Right ventricle myocardium superior (tissue), 1 donor: ENCODE measurements at regions of chr7 and their contacts with region 1.

Region 1: GRCh38 chr7:106461993-106462859 is 177.4 kb upstream of the NAMPT start:
- DNase-seq: peak; percentile 23
- ATAC-seq: peak; percentile 63

Region 2: GRCh38 chr7:106176414-106177299 is 285.6 kb before region 1 on chr7:
- intact Hi-C with region 1: loop called (anchors 1 kb)
- DNase-seq: peak; percentile 91
- ATAC-seq: peak; percentile 90

Region 3: GRCh38 chr7:106522696-106523095 is 60.5 kb after region 1 on chr7:
- intact Hi-C with region 1: no loop called
- DNase-seq: no peak
- ATAC-seq: no peak

Region 4: DNA sequence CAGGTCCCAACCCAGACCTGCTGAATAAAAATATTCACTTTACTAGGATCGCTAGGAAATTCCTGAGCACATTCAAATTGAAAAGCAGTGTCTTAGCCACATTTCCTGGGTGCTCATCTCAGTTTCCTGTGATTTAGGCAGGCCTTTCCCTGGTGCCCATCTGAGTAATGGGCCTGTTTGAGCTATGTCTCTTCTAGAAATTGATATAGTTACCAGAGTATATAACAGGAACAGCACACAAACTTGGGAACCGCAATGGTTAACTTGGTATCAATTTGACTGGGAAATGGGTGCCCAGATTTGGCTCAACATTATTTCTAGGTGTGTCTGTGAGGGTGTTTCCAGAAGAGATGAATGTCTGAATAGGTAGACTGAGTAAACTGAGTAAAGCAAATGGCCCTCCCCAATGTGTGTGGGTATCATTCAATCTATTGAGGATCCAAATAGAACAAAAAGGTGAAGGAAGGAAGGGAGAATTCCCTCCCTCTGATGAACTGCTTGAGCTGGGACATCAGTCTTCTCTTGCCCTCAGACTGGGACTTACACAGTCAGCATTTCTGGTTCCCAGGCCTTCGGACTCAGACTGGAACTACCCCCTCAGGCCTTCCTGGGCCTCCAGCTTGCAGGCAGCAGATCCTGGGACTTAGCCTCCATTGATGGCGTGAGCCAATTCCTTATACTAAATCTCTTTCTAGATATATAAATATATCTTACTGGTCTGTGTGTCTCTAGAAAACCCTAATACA is 99.6 kb after region 1 on chr7:
- intact Hi-C with region 1: no loop called
- DNase-seq: no peak
- ATAC-seq: no peak